ENCODE measurements at regions of chr12 and their contacts with region 1.

Region 1: DNA sequence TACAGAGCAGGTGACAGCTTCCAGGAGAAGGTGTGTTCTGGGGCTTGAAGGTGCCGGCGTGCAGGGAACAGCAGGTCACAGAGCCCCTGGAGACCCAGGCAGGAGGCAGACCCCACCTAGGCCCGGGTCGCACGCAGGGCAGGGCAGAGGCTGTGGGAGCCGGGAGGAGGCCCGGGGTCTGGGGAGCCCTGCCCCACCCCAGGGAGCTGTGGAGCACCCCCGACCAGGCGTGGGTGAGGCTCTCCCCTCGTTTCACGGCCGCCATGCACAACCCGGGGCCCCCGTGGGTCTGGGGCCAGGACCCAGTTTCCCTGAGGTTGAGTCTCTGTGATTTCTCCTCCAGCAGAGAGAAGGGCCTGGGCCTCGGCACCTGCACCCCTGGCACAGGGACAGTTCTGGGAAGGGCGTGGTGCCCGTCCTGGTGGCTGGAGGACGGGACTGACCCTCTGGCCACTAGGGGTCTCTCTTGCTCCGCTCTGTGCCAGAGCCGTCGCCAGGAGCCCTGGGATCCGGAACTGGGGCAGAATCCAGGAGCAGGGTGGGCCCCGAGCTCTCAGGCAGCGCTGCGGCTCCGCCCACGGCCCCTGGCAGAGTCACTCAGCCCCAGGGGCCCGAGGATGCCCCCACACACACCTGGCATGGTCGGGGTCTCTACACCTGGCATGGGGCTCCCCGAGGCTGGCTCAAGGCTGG is 75.2 kb upstream of the FBRSL1 start:
- DNase-seq: peak; percentile 84 to 92 (median 89)
- ATAC-seq: peak; percentile 90 to 93
- H3K4me3 ChIP-seq: no peak overlapping the region
- H3K27ac ChIP-seq: no peak overlapping the region
- H3K4me1 ChIP-seq: no peaks in the 10 kb centered on the region
- H3K27me3 ChIP-seq: no peaks in the 10 kb centered on the region

Region 2: DNA sequence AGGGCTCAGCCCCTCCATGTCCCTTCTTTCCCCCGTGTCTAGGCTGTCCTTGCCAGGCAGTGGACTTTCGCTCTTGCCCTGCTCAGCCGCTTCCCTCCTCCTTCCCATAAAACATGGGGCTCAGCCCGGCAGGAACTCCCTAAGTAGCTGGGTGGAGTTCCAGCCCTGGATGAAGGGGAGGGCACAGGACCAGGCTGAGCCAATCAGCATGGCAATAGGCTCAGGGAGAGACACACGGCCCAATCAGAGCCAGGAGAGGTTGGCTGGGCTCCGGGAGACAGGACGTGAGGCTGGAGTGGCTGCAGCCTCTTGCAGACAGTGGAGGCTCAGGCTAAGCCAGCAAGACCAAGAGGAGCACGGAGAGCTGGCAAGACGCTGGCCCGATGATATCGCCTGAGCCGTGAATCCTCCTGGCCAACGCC is 139.7 kb before region 1 on chr12:
- intact Hi-C with region 1: no loop called
- DNase-seq: peak in 2 of 3 donors; percentile 41 to 46
- ATAC-seq: no peak
- H3K4me3 ChIP-seq: no peak overlapping the region
- H3K27ac ChIP-seq: no peak overlapping the region
- H3K4me1 ChIP-seq: no peaks in the 10 kb centered on the region
- H3K27me3 ChIP-seq: no peaks in the 10 kb centered on the region

Region 3: DNA sequence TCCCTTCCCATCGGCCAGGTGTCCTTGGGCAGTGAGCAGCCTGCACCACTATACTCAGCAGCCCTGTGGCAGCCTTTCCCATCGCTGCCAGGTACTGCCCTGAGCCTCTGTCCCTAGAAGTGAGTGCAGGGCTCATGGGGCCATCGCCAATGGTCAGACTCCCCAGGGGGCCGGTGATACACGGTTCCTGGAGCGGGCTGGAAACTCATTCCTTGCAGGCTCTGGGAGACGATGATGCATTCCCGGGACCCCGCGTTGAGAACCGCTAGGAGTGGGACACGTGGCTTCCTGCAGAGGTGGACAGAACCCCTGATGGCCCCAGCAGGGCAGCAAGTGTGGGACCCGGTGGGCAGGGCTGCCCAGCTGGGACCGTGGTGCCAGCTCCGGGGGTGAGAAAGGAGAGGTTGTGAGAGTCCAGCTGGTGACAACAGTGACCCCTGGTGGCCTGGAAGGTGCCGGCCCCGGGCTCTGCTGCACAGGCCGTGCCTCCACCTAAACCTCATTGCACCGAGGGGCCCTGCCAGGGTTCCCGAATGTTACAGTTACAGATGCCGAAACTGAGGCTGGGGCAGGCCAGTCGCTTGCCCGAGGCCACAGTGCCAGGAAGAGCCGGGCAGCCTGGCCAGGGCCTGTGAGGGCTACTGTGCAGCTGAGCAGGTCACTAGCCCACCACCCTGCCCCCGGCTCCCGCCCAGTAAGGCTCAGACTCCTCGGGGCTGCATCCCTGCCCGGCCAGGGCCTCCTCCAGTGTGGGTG is 109.0 kb after region 1 on chr12:
- intact Hi-C with region 1: loop called (anchors 5 to 10 kb)
- DNase-seq: peak; percentile 71 to 89 (median 88)
- ATAC-seq: peak; percentile 57 to 63
- H3K4me3 ChIP-seq: no peak overlapping the region
- H3K27ac ChIP-seq: no peak overlapping the region
- H3K4me1 ChIP-seq: peaks cover 3% of the 10 kb centered on the region
- H3K27me3 ChIP-seq: no peaks in the 10 kb centered on the region

Region 4: DNA sequence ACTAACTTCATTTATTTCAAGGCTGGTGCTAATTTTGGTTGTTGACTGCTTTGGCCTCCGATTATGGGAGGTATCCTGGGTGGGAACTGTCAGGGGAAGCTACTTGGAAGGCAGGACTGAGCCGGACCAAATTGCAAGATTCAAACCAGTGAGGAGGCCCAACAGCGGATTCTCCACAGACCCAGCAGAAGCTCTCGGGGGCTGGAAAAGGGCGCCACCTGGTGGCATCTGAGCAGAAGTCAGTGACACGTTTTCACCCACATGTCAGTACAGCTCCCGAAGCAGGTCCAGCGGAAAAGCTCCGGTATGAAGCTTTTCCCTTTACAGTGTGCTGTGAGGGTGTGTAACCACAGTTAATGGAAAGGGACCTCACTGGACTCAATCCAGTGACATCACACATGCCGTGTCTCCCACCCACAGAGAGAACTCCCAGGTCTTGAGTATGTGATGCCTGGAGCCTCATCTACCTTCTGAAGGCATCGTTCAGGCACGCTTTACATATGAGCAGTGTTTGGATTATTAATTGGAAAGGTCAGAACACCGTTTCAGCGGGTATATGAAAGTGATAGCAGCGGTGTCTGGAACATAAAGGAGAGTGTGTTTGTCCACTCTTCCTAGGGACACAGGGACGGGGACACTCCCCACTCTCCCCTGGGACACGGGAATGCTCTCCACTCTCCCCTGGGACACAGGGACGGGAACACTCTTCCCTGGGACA is 200.2 kb after region 1 on chr12:
- intact Hi-C with region 1: loop called (anchors 2 to 5 kb)
- DNase-seq: peak; percentile 81 to 92 (median 90)
- ATAC-seq: peak; percentile 86 to 89
- H3K4me3 ChIP-seq: no peak overlapping the region
- H3K27ac ChIP-seq: no peak overlapping the region
- H3K4me1 ChIP-seq: no peaks in the 10 kb centered on the region
- H3K27me3 ChIP-seq: no peaks in the 10 kb centered on the region